Activated naive CD4-positive, alpha-beta T cell treated with anti-CD3 and anti-CD28 coated beads for 36 hours (primary cell): ENCODE measurements at regions of chr4 and their contacts with region 1.

Region 1: DNA sequence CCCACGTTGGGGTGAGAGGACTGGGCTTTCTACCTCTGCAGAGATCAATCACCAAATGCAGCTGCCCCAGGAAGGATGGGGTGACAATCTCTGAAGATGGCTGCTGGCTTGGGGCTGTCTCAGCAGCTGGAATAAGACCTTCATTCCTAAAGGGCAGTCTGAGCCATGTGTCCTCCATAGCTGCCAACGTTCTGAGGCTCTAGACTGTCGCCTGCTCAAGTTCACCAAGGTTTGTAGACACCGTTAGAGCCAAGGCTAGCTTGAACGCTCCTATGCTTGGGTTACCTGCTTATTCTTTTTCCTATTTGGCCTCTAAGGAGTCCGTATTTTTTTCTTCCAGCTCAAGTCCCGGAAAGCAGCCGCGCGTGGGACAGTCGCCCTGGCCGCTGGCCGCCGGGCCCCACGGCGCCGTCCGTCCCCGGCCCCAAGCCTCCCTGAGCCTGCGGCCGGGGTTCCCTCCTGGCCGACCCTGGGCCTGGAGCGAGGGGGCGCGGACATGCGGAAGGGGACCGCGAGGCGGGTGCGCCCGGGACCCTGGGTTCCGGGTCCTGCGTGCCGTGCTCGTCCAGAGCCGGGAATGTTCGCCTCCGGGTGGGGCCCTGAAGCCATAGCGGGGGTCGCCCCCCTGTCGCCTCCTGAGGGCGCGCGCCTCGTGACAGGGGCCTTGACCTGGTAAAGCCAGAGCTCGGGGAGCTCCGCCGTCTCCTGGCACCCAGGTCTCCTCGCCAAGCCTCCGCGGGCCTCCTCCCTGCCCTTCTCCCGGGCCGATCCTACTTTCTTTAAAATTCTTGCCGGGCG is 23.3 kb downstream of the MRFAP1 start:
- DNase-seq: no peak
- H3K4me3 Mint-ChIP-seq: peak overlapping the region; percentile 17
- H3K27ac Mint-ChIP-seq: no peak overlapping the region
- H3K4me1 Mint-ChIP-seq: peaks cover 11% of the 10 kb centered on the region
- H3K27me3 Mint-ChIP-seq: no peaks in the 10 kb centered on the region

Region 2: DNA sequence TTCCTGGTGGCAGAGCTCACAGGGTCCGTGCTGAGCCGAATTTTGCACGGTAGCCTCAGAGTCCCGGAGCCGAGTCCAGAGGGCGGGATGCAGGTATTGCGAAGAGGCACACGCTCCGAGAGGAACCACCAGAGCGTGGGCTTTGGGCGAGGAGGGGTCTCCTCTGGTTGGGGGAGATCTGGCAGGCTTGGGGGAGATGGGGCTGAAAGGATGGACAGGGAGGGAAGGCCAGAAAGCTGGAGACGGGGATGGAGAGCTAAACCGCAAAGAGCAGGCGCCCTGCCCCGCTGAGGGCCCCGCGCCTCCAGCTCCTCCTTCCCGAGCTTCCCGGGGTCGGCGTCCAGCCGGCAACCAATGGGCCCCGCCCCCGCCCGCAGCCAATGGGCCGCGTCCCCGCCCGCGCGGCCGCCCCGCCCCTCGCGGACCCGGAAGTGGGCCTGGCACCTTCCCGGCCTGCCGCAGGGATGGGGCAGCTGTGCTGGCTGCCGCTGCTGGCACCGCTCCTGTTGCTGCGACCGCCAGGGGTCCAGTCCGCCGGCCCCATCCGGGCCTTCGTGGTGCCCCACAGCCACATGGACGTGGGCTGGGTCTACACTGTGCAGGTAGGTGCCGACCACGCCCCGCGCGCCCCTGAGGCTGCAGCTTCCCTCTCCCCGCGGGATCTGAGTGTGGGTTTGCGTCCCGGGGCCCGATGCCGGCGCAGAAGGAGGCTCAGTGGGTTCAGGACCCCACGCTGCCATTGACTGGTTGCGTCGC is 88.9 kb before region 1 on chr4 and contains the start of gene MAN2B2:
- CTCF ChIA-PET with region 1: interaction called, 3 read pairs
- intact Hi-C with region 1: loop called (anchors 2 kb)
- DNase-seq: peak; percentile 83
- H3K4me3 Mint-ChIP-seq: peak within 1 kb of the TSS; percentile 84
- H3K27ac Mint-ChIP-seq: peak within 1 kb of the TSS; percentile 60
- H3K4me1 Mint-ChIP-seq: peaks cover 4% of the 10 kb centered on the region
- H3K27me3 Mint-ChIP-seq: no peaks in the 10 kb centered on the region
- total RNA-seq, gene MAN2B2: 12.7 to 12.8 TPM